ENCODE measurements at regions of chr20 and their contacts with region 1.

Region 1: GRCh38 chr20:50115591-50116372 is 2.8 kb upstream of the UBE2V1 start:
- DNase-seq: peak; percentile 96
- H3K4me3 Mint-ChIP-seq: peak overlapping the region; percentile 89
- H3K27ac Mint-ChIP-seq: peak overlapping the region; percentile 86
- H3K4me1 Mint-ChIP-seq: peaks cover 44% of the 10 kb centered on the region
- H3K27me3 Mint-ChIP-seq: no peaks in the 10 kb centered on the region

Region 2: DNA sequence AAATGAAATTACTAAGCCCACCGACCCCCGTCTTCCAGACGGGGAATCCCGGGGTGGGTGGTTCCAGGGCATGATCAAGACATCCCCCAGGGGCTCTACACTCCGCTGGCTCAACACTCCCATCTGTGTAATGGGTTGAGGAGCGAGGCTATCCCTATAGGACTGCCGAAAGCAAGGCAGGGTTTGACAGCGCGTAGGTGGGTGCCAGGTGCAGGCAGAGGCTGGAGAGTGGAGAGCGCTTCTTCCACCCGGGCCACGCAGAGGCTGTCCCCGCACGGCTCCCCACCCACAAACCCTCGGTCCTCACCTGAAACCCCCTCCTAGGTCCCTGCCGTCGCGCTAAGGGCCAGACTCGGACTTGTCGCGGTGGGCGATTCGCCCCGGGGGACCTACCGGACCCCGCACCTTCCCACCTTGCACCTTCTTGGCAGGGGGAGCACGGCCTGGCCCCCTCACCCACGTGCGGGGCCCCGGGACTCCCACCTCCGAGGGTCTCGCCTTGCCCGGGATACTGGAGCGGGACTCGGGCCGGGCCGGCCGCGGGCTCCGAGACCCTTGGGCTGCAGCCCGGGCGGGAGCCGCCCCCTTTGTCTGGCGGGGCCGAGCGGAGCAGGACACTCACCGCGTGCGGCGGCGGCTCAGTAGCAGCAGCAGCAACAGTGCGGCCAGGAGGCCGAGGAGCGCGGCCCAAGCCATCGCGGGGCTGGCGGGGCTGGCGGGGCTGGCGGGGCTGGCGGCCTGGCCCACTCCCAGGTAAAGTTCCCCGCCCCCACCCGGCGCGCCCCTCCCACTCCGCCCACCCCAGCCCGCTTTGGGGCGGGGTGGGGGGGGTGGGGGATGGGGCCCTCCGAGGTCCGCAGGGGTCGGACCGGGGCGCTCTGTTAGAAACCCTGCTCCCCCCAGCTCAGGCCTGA is 548.1 kb before region 1 on chr20 and contains the start of gene PTGIS:
- CTCF ChIA-PET with region 1: no interaction called
- intact Hi-C with region 1: no loop called
- DNase-seq: no peak
- H3K4me3 Mint-ChIP-seq: no peak within 1 kb of the TSS
- H3K27ac Mint-ChIP-seq: no peak within 1 kb of the TSS
- H3K4me1 Mint-ChIP-seq: peaks cover 3% of the 10 kb centered on the region
- H3K27me3 Mint-ChIP-seq: peaks cover 42% of the 10 kb centered on the region
- total RNA-seq, gene PTGIS: not detected

Region 3: DNA sequence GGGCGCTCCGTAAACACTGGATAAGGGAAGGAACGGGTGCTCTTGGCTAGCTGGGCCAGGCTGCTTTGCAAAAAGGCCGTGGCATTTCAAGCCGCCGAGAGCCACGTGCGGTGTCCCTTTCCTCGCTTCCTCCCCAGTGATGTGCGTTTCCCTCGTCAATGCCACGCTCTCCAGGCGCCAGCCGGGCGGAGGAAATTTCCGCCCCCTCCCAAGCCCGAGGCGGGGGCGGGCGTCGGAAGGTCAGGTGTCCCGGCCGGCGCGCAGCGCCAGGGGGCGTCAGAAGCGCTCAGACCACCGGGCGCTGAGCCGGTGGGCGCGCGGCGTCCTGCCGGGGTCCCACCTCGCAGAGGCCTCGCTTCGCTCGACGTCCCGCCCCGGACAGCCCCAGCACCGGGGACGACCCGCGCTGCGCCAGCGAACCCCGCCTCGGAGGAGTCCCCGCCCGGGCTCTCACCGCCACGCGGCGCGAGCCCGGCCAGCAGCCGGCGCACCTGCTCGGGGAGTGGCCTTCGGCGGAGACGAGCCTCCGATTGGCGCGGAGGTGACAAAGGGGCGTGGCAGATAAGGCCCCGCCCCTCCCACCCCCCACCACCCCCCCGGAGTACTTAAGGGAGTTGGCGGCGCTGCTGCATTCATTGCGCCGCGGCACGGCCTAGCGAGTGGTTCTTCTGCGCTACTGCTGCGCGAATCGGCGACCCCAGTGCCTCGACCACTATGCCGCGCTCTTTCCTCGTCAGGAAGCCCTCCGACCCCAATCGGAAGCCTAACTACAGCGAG is 133.2 kb before region 1 on chr20 and contains the start of gene SNAI1:
- CTCF ChIA-PET with region 1: interaction called, 13 read pairs
- intact Hi-C with region 1: no loop called
- DNase-seq: peak; percentile 75
- H3K4me3 Mint-ChIP-seq: peak within 1 kb of the TSS; percentile 48
- H3K27ac Mint-ChIP-seq: no peak within 1 kb of the TSS
- H3K4me1 Mint-ChIP-seq: peaks cover 20% of the 10 kb centered on the region
- H3K27me3 Mint-ChIP-seq: peaks cover 3% of the 10 kb centered on the region
- total RNA-seq, gene SNAI1: 0.31 TPM in 1 of 2 experiments, not detected in the other

Region 4: GRCh38 chr20:50153485-50154377 is 37.9 kb after region 1 on chr20 and contains the start of gene PEDS1:
- CTCF ChIA-PET with region 1: interaction called, 77 read pairs
- intact Hi-C with region 1: loop called (anchors 1 kb)
- DNase-seq: peak; percentile 87
- H3K4me3 Mint-ChIP-seq: peak within 1 kb of the TSS; percentile 75
- H3K27ac Mint-ChIP-seq: peak within 1 kb of the TSS; percentile 84
- H3K4me1 Mint-ChIP-seq: peaks cover 39% of the 10 kb centered on the region
- H3K27me3 Mint-ChIP-seq: no peaks in the 10 kb centered on the region
- total RNA-seq, gene PEDS1: 10.4 to 11.2 TPM

Region 5: DNA sequence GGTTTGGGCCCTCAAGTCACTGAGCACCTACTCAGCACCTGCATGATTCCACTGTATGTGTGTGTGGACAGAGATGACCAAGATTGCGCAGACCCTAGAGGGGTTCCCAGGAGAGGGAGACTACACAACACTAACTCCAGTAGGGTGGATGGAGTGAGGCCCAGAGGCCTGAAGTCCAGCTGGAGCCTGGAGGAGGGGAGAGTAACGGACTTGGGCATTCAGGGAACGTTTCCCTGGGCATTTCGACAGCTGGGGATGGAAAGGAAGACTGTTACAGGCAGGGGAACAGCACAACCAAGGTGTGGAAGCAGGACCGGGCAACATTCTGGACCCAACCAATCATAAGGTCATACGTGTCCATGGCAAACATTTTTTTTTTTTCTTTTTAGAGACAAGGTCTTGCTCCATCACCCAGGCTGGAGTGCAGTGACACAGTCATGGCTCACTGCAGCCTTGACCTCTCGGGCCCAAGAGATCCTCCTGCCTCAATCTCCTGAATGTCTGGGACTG is 63.8 kb after region 1 on chr20:
- CTCF ChIA-PET with region 1: interaction called, 55 read pairs
- intact Hi-C with region 1: loop called (anchors 2 kb)
- DNase-seq: no peak
- H3K4me3 Mint-ChIP-seq: no peak overlapping the region
- H3K27ac Mint-ChIP-seq: no peak overlapping the region
- H3K4me1 Mint-ChIP-seq: no peaks in the 10 kb centered on the region
- H3K27me3 Mint-ChIP-seq: peaks cover 9% of the 10 kb centered on the region

Region 6: DNA sequence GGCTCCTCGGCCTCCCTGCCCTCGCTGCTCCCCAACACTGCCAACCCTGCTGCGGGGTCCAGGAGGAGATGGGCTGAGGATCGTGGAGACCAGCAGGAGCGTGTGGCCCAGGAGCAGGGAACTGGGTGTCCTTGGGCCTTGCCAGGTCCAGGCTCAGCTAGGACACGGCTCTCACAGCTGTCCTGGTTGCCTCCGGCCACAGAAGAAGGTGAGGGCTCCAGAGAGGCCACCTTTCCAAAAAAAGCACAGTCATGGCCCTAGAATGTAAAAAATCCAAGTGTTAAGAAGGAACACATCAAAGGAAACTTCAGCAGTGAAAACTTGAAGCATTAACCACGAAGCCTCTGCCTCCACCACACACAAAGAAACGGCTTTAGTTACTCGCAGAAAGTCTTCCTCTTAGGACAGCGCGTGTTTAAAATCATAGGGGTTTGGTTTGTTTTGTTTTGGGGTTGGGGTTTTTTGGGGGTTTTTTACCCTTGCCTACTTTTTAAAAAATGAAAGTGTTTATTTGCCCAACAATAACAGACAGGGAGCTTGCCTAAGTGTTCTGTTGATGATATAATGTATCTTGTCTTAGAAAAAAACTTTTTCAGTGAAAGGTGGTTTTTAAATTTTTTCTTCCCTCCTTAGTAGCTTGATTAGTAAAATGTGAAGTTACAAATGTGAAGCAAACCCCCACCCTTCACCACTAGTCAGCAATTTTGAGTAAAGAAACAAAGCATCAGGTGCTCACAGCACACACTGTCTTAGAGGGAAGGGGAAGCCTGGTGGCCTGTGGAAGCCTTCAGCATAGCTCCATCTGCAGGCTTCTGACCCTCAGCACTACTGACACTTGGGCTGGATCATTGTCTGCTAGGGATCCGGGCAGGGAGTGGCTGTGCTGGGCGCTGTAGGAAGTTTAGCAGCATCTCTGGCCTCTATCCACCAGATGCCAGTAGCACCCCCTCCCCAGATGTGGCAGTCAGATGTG is 454.4 kb after region 1 on chr20:
- CTCF ChIA-PET with region 1: no interaction called
- intact Hi-C with region 1: loop called (anchors 10 kb)
- DNase-seq: peak; percentile 83
- H3K4me3 Mint-ChIP-seq: peak overlapping the region; percentile 23
- H3K27ac Mint-ChIP-seq: peak overlapping the region; percentile 91
- H3K4me1 Mint-ChIP-seq: peaks cover 84% of the 10 kb centered on the region
- H3K27me3 Mint-ChIP-seq: no peaks in the 10 kb centered on the region

Measured in activated naive CD4-positive, alpha-beta T cell treated with anti-CD3 and anti-CD28 coated beads for 36 hours (primary cell).